Common myeloid progenitor, CD34-positive (primary cell): ENCODE measurements at regions of chr3 and their contacts with region 1.

Region 1: DNA sequence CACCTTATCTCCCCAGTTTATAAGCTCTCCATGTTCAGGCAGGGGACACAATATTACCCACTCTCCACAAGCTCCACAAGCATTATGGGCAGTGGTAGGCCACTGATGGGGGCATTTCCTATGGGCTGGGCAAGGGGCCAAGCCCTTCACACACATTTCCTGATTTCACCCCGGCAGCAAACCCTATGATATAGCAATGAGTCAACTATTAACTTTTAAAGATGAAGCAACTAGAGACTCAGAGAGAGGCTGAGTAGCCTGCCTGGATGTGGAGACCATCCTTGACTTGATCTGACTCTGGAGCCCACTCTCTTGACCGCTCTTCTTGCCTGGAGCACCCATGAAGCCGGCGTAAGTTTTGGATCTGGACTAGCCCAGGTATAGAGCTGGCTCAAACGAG is 27.4 kb downstream of the FOXL2NB start:
- DNase-seq: peak; percentile 39 to 77 (median 75)
- H3K4me3 ChIP-seq: no peak overlapping the region
- H3K27ac ChIP-seq: no peak overlapping the region
- H3K4me1 ChIP-seq: peaks cover 0 to 7% (median 4%) of the 10 kb centered on the region in 4 experiments
- H3K27me3 ChIP-seq: peaks cover 0 to 3% (median 0%) of the 10 kb centered on the region in 5 experiments

Region 2: GRCh38 chr3:138941259-138941885 is 33.1 kb before region 1 on chr3:
- CTCF ChIA-PET with region 1: interaction called, 44 read pairs
- POLR2A ChIA-PET with region 1: no interaction called
- DNase-seq: peak; percentile 63 to 76 (median 72)
- H3K4me3 ChIP-seq: no peak overlapping the region
- H3K27ac ChIP-seq: no peak overlapping the region
- H3K4me1 ChIP-seq: peaks cover 2 to 57% (median 48%) of the 10 kb centered on the region in 4 experiments
- H3K27me3 ChIP-seq: peaks cover 7 to 99% (median 81%) of the 10 kb centered on the region in 5 experiments

Region 3: GRCh38 chr3:138985932-138986331 is 11.5 kb after region 1 on chr3:
- CTCF ChIA-PET with region 1: interaction called, 15 read pairs
- POLR2A ChIA-PET with region 1: no interaction called
- DNase-seq: no peak
- H3K4me3 ChIP-seq: no peak overlapping the region
- H3K27ac ChIP-seq: no peak overlapping the region
- H3K4me1 ChIP-seq: no peaks in the 10 kb centered on the region
- H3K27me3 ChIP-seq: peaks cover 0 to 11% (median 2%) of the 10 kb centered on the region in 5 experiments